A549 (cell line): ENCODE measurements at regions of chr1 and their contacts with region 1.

Region 1: DNA sequence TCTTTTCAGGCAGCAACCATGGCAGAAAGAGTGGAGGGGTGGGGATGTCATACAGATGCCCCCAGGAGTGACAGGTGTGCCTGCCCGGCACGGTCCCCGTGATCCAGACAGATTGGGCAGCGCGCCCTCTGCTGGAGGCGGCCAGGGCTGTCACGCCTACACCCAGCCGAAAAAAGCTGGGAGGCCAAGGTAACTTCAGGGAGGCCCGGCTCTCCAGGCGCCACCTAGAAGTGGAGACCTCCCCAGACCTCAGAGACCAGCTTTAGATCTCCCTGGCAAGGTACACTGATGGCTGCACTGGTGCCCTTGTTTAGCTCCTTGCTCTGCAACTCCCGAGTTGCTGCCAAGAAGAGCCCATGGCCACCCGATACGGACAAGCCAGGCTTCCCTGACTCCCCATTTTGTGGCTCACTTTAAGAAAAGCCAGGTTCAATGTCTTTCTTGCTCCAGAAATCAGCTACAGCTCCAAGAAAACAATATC is 6.6 kb downstream of the GOLT1A start:
- DNase-seq: peak; percentile 37 to 84
- ATAC-seq: peak; percentile 89 to 99
- H3K4me3 ChIP-seq: no peak overlapping the region
- H3K27ac ChIP-seq: no peak overlapping the region
- H3K4me1 ChIP-seq: peaks cover 2% of the 10 kb centered on the region; the same call in 1 of the 3 replicates
- CTCF ChIP-seq: peak; percentile 87
- EP300 ChIP-seq: no peak
- POLR2A ChIP-seq: no peak
- RAD21 ChIP-seq: peak; percentile 65 to 69

Region 2: DNA sequence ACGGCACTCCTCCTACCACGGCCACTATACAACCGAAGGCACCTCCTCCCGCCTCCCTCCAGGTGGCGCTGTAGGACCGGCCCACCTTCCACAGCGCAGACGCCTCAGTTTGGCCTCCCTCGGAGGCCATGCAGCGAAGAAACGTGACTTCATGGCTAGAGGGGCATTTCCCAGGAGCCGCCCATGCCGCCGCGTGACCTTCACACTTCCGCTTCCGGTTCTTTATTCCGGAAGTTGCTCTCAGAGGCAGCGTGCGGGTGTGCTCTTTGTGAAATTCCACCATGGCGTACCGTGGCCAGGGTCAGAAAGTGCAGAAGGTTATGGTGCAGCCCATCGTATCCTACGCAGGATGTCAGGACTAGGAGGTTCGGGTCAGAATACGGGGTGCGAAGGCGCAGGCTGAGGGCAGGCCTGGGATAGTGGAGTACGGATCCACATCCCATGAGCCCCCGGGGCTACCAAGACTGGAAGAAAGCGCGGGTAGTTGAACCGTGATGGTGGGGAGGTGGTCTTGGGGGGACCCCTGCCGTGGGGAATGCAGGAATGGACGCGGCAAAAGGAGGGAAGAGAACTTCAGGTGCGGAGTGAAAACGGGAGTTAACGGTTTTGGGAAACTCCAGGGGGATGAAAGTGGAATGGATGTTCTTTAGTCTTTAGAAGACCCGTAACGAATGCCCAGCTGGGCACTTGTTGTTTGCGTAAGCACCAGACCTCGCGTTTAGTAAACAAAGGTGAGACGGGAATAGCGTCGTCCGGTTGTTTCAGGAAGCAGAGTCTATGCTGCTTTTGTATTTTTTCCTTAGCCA is 345.6 kb before region 1 on chr1 and contains the start of gene SNRPE:
- CTCF ChIA-PET with region 1: interaction called, 17 read pairs
- POLR2A ChIA-PET with region 1: no interaction called
- DNase-seq: peak; percentile 95 to 99
- ATAC-seq: peak; percentile 94 to 97
- H3K4me3 ChIP-seq: peak within 1 kb of the TSS; percentile 92
- H3K27ac ChIP-seq: peak within 1 kb of the TSS; percentile 92 to 93
- H3K4me1 ChIP-seq: peaks cover 20% of the 10 kb centered on the region; the same call in 2 of the 3 replicates
- CTCF ChIP-seq: peak; percentile 90
- EP300 ChIP-seq: no peak
- POLR2A ChIP-seq: peak; percentile 76
- RAD21 ChIP-seq: peak; percentile 94 to 97
- polyA plus RNA-seq, gene SNRPE: 371 and 386 TPM in 2 replicates

Region 3: DNA sequence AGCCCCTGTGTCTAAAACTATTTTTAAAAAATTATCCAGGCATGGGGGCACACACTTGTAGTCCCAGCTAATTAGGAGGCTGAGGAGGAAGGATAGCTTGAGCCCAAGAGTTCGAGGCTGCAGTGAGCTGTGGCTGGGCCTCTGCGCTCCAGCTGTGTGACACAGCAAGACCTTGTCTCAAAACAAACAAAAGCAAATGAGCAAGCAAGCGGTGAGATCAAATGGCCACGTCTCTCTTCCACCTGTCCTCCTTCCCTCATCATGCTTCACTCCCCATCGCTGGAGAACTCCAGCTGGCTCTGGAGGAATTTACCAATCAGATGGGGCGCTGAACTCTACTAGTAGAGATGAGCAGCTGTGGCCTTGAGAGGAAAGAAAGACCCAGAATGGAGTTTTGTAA is 27.0 kb before region 1 on chr1:
- CTCF ChIA-PET with region 1: interaction called, 314 read pairs
- POLR2A ChIA-PET with region 1: no interaction called
- DNase-seq: no peak
- ATAC-seq: no peak
- H3K4me3 ChIP-seq: no peak overlapping the region
- H3K27ac ChIP-seq: no peak overlapping the region
- H3K4me1 ChIP-seq: no peaks in the 10 kb centered on the region
- CTCF ChIP-seq: no peak
- EP300 ChIP-seq: no peak
- POLR2A ChIP-seq: no peak
- RAD21 ChIP-seq: no peak

Region 4: GRCh38 chr1:204219971-204220608 is 12.9 kb after region 1 on chr1:
- CTCF ChIA-PET with region 1: interaction called, 33 read pairs
- POLR2A ChIA-PET with region 1: no interaction called
- DNase-seq: no peak
- ATAC-seq: no peak
- H3K4me3 ChIP-seq: no peak overlapping the region
- H3K27ac ChIP-seq: no peak overlapping the region
- H3K4me1 ChIP-seq: no peaks in the 10 kb centered on the region
- CTCF ChIP-seq: no peak
- EP300 ChIP-seq: no peak
- POLR2A ChIP-seq: no peak
- RAD21 ChIP-seq: no peak

Region 5: DNA sequence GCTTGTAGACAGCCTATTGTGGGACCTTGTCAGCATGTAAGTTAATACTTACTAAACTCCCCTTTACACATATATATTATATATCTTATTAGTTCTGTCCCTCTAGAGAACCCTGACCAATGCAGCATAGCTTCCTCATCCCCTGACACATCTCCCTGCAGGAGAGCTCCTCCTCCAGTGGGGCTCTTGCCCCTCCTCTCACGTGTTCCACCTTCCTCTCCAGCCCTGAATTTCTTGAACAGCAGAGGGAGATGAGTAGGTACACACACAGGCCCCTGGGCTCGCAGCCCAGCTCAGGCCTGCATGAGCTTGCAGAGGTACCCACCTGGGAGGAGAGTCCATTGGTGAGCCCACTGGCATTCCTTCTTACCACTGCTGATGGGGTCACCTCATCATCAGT is 33.9 kb after region 1 on chr1:
- CTCF ChIA-PET with region 1: interaction called, 14 read pairs
- POLR2A ChIA-PET with region 1: no interaction called
- DNase-seq: peak in 1 of 2 experiments; percentile 14
- ATAC-seq: peak; percentile 74 to 84
- H3K4me3 ChIP-seq: no peak overlapping the region
- H3K27ac ChIP-seq: no peak overlapping the region
- H3K4me1 ChIP-seq: no peaks in the 10 kb centered on the region
- CTCF ChIP-seq: no peak
- EP300 ChIP-seq: no peak
- POLR2A ChIP-seq: no peak
- RAD21 ChIP-seq: no peak

Region 6: GRCh38 chr1:204377795-204378608 is 170.8 kb after region 1 on chr1:
- CTCF ChIA-PET with region 1: interaction called, 10 read pairs
- POLR2A ChIA-PET with region 1: no interaction called
- DNase-seq: peak; percentile 59 to 64
- ATAC-seq: peak; percentile 79 to 80
- H3K4me3 ChIP-seq: peak overlapping the region; percentile 76
- H3K27ac ChIP-seq: peak overlapping the region; percentile 94 to 95
- H3K4me1 ChIP-seq: peaks cover 33% of the 10 kb centered on the region
- CTCF ChIP-seq: no peak
- EP300 ChIP-seq: no peak
- POLR2A ChIP-seq: peak; percentile 42
- RAD21 ChIP-seq: no peak